Lower lobe of right lung (tissue), 2 donors: ENCODE measurements at regions of chr1 and their contacts with region 1.

Region 1: GRCh38 chr1:23751050-23751814 is 8.0 kb downstream of the ELOA start:
- DNase-seq: no peak
- ATAC-seq: peak; percentile 80 to 87
- H3K4me3 ChIP-seq: no peak overlapping the region
- H3K27ac ChIP-seq: no peak overlapping the region
- H3K4me1 ChIP-seq: peaks cover 22% of the 10 kb centered on the region
- H3K27me3 ChIP-seq: no peaks in the 10 kb centered on the region
- CTCF ChIP-seq: peak; percentile 65

Region 2: DNA sequence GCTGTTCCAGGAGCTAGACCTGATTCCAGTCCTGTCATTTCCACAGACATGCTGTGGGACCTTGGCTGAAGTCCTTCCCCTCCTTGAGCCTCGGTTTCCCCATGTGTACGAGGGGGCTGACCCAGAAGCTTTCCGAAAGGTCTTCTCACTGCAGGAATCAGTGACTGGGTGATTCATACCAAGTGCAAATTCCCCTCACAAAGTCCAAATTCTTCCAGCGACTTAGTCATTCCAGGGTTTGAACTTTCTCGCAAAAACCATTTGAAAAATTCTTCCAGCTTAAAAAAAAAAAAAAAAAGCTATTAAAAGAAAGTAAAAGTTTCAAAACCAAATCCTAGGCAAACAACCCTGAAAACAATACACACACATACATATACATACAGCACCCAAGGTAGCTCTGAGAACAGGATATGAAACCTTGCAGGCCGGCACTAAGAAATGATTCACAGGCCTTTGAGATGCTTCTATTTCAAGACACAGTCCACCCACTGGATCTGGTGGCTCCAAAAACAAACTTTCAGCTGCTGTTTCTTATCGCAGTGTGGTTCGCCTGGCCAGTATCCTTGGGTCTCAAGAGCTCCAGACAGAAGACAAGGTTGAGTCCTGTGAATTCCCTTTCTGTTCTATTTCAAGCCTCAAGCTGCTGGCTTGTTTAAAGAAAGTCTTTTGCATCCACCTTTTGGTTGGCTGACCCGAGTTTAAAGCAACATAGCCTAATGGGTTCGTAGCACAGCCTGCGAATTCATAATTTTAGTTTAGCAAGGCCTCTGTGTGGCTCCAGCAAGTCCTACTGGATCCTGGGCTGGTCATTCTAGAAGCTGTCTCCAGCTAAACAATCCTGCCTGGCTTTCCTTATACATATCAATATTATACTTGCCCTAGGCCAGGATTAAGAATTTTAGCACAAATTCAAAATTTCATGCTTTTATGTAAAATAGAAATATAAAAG is 173.9 kb before region 1 on chr1:
- intact Hi-C with region 1: no loop called
- DNase-seq: no peak
- ATAC-seq: peak; percentile 50 to 54
- H3K4me3 ChIP-seq: no peak overlapping the region
- H3K27ac ChIP-seq: peak overlapping the region; percentile 72
- H3K4me1 ChIP-seq: peaks cover 38% of the 10 kb centered on the region
- H3K27me3 ChIP-seq: no peaks in the 10 kb centered on the region
- CTCF ChIP-seq: no peak

Region 3: GRCh38 chr1:23699280-23700179 is 51.7 kb before region 1 on chr1:
- intact Hi-C with region 1: loop called (anchors 5 kb)
- DNase-seq: no peak
- ATAC-seq: no peak
- H3K4me3 ChIP-seq: no peak overlapping the region
- H3K27ac ChIP-seq: no peak overlapping the region
- H3K4me1 ChIP-seq: peaks cover 39% of the 10 kb centered on the region
- H3K27me3 ChIP-seq: no peaks in the 10 kb centered on the region
- CTCF ChIP-seq: no peak

Region 4: DNA sequence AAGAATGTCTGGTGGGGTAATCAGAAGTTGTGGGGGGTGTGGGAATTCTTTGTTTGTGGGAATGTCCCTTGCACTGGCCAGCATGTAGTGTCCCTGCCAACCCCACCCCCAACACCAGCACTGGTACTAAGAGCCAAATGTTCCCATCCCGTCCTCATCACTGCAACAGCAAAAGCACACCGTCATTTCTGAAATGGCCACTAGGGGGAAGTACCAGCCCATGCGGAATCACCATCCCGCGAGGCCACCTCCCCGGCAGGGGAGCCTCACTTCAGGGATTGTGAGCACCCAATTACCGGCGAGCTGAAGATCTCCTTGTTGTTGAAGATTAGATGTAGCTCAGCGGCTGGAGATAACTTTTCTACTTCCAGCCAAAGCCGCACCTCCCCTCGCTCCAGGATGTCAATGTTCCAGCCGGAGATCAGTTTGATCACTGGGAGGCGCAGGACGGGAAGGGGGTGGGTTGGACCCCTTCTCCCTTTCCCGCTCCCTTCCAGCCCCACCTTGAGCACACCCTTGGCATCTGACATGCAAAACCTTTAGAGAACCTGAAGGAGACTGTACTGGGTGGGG is 319.7 kb after region 1 on chr1:
- intact Hi-C with region 1: no loop called
- DNase-seq: peak; percentile 73
- ATAC-seq: peak; percentile 88 to 90
- H3K4me3 ChIP-seq: no peak overlapping the region
- H3K27ac ChIP-seq: no peak overlapping the region
- H3K4me1 ChIP-seq: peaks cover 5% of the 10 kb centered on the region
- H3K27me3 ChIP-seq: no peaks in the 10 kb centered on the region
- CTCF ChIP-seq: peak; percentile 82

Region 5: GRCh38 chr1:25054526-25055323 is 1303.5 kb after region 1 on chr1:
- intact Hi-C with region 1: no loop called
- DNase-seq: peak; percentile 23
- ATAC-seq: no peak
- H3K4me3 ChIP-seq: no peak overlapping the region
- H3K27ac ChIP-seq: no peak overlapping the region
- H3K4me1 ChIP-seq: no peaks in the 10 kb centered on the region
- H3K27me3 ChIP-seq: peaks cover 42% of the 10 kb centered on the region
- CTCF ChIP-seq: no peak